IMR-90 (cell line): ENCODE measurements at regions of chr7 and their contacts with region 1.

Region 1: GRCh38 chr7:12686894-12687717 is at the start of gene ARL4A:
- DNase-seq: peak; percentile 98
- ATAC-seq: peak; percentile 95
- H3K4me3 ChIP-seq: peak within 1 kb of the TSS; percentile 77
- H3K27ac ChIP-seq: peak within 1 kb of the TSS; percentile 67
- H3K4me1 ChIP-seq: no peaks in the 10 kb centered on the region
- H3K27me3 ChIP-seq: no peaks in the 10 kb centered on the region
- CTCF ChIP-seq: peak; percentile 63
- POLR2A ChIP-seq: peak; percentile 94
- RAD21 ChIP-seq: peak; percentile 66
- total RNA-seq, gene ARL4A: 22.4 and 48.0 TPM in 2 replicates

Region 2: DNA sequence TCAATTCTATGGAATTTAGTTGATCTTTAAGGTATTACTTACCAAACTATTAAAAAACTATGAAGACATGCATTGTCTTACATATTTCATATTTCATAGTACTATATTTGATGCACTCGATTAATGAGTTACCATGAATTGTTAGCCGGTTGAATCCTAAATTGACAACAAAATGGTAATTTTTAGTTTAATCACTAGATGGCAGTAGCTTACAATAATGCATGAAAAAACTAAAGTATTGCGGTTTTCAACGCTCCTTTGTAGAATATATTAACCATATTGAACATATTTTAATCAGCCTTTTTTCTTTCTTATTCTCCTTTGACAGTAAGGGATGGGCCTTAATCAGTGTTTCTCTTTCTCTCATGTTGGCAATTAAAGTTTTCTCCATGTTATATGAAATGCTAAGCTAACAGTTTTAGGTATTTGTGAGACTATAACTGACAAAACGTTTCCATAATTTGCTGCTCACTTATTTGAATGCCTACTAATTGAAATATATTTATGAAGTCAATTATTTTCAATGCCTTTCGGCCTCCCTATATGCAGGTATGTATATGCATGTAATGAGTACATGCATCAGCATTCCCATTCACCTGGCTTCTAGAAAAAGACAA is 48.1 kb before region 1 on chr7:
- CTCF ChIA-PET with region 1: interaction called, 7 read pairs
- POLR2A ChIA-PET with region 1: interaction called, 3 read pairs
- dilution Hi-C with region 1: no loop called
- in situ Hi-C with region 1: no loop called
- intact Hi-C with region 1: loop called (anchors 1 kb)
- DNase-seq: peak; percentile 54
- ATAC-seq: peak; percentile 69
- H3K4me3 ChIP-seq: no peak overlapping the region
- H3K27ac ChIP-seq: no peak overlapping the region
- H3K4me1 ChIP-seq: peaks cover 3% of the 10 kb centered on the region; the same call in 1 of the 2 replicates
- H3K27me3 ChIP-seq: no peaks in the 10 kb centered on the region; the same call in 1 of the 2 replicates
- CTCF ChIP-seq: peak; percentile 76
- POLR2A ChIP-seq: no peak
- RAD21 ChIP-seq: peak; percentile 77

Region 3: DNA sequence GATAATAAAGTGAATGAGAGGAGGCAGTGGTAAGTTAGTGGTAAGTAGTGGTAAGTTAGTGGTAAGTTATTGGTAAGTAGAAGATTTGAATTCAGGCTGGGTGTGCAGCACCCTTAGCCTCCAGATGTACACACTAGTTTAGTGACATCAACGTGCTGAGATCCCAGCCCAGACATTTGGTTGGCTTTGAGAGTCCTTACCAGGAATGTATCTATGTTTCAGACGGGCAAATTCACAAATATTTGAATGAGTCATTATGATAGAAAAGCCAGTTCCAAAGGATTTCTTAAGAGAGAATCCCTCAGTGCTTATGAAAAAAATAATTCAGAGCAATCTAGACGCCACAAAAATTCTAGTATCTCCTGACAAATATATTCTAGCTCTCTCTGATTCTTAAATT is 70.3 kb after region 1 on chr7:
- CTCF ChIA-PET with region 1: interaction called, 4 read pairs
- POLR2A ChIA-PET with region 1: no interaction called
- dilution Hi-C with region 1: no loop called
- in situ Hi-C with region 1: no loop called
- intact Hi-C with region 1: loop called (anchors 5 kb)
- DNase-seq: peak; percentile 91
- ATAC-seq: peak; percentile 98
- H3K4me3 ChIP-seq: no peak overlapping the region
- H3K27ac ChIP-seq: no peak overlapping the region
- H3K4me1 ChIP-seq: peaks cover 8% of the 10 kb centered on the region
- H3K27me3 ChIP-seq: no peaks in the 10 kb centered on the region
- CTCF ChIP-seq: no peak
- POLR2A ChIP-seq: no peak
- RAD21 ChIP-seq: no peak

Region 4: GRCh38 chr7:13036256-13036780 is 349.2 kb after region 1 on chr7:
- CTCF ChIA-PET with region 1: interaction called, 3 read pairs
- POLR2A ChIA-PET with region 1: no interaction called
- dilution Hi-C with region 1: no loop called
- in situ Hi-C with region 1: no loop called
- intact Hi-C with region 1: loop called (anchors 2 kb)
- DNase-seq: peak; percentile 62
- ATAC-seq: no peak
- H3K4me3 ChIP-seq: no peak overlapping the region
- H3K27ac ChIP-seq: peak overlapping the region; percentile 70
- H3K4me1 ChIP-seq: peaks cover 7% of the 10 kb centered on the region
- H3K27me3 ChIP-seq: no peaks in the 10 kb centered on the region
- CTCF ChIP-seq: no peak
- POLR2A ChIP-seq: no peak
- RAD21 ChIP-seq: no peak

Region 5: GRCh38 chr7:13197501-13197900 is 510.4 kb after region 1 on chr7:
- CTCF ChIA-PET with region 1: no interaction called
- POLR2A ChIA-PET with region 1: no interaction called
- dilution Hi-C with region 1: no loop called
- in situ Hi-C with region 1: no loop called
- intact Hi-C with region 1: loop called (anchors 5 kb)
- DNase-seq: peak; percentile 60
- ATAC-seq: peak; percentile 57; the same call in 1 of the 2 replicates
- H3K4me3 ChIP-seq: no peak overlapping the region
- H3K27ac ChIP-seq: no peak overlapping the region
- H3K4me1 ChIP-seq: no peaks in the 10 kb centered on the region
- H3K27me3 ChIP-seq: no peaks in the 10 kb centered on the region; the same call in 1 of the 2 replicates
- CTCF ChIP-seq: no peak
- POLR2A ChIP-seq: no peak
- RAD21 ChIP-seq: no peak